Activated naive CD4-positive, alpha-beta T cell treated with anti-CD3 and anti-CD28 coated beads for 36 hours (primary cell): ENCODE measurements at regions of chrX and their contacts with region 1.

Region 1: DNA sequence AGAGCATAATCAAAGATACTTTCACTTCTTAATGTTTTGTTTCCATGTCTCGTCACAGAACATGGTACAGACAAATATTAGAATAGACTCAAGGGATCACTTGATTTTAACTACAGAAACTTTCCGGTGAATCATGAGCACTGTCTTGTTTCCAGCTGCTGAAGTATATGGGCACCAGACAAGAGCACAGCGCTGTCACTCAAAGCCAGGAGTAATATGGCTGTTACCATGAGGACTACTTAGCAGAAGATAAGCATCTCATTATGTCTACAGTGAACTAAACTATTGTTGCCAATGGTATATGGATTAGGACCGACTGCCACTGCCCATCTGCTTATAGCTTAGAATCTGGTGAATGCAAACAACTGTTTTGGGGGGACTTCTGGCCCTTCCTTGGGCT is 34.3 kb downstream of the MECP2 start:
- DNase-seq: no peak
- H3K4me3 Mint-ChIP-seq: no peak overlapping the region
- H3K27ac Mint-ChIP-seq: peak overlapping the region; percentile 12
- H3K4me1 Mint-ChIP-seq: peaks cover 78% of the 10 kb centered on the region
- H3K27me3 Mint-ChIP-seq: no peaks in the 10 kb centered on the region

Region 2: DNA sequence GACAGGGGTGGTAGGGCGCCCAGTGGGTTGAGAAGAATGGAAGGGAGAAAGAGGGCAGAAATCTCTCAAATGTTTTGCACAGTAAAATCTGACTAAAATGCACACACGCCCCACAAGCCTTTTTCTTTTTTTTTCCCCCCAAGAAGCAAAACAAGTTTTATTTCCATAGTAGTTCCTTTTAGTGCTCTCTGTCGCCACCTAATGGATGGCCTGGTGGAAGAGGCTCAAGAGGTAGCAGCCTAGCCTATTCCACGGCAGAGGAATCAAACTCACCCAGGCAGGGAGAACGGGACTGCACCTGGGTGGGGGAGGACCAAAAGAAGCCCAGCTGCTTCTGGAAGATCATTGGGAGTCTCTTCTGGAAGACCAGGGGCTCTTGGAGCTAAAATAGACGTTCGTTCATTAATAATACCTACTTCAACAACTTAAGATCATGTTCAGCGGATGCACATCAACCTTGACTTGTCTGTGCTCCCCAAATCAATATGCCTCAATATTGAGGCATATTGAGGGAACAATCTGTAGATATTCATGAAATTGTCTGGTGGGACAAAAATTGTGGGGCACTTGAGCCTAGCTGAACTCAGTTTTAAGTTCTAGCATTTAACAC is 11.9 kb before region 1 on chrX:
- CTCF ChIA-PET with region 1: interaction called, 4 read pairs
- intact Hi-C with region 1: loop called (anchors 1 kb)
- DNase-seq: peak; percentile 81
- H3K4me3 Mint-ChIP-seq: no peak overlapping the region
- H3K27ac Mint-ChIP-seq: peak overlapping the region; percentile 39
- H3K4me1 Mint-ChIP-seq: peaks cover 32% of the 10 kb centered on the region
- H3K27me3 Mint-ChIP-seq: no peaks in the 10 kb centered on the region